Activated CD4-positive, alpha-beta T cell treated with anti-CD3 and anti-CD28 coated beads, Interleukin-2, amount 10 ng/mL, durations not matched to agents 24 days and 14 days (primary cell): ENCODE measurements at regions of chr1 and their contacts with region 1.

Region 1: DNA sequence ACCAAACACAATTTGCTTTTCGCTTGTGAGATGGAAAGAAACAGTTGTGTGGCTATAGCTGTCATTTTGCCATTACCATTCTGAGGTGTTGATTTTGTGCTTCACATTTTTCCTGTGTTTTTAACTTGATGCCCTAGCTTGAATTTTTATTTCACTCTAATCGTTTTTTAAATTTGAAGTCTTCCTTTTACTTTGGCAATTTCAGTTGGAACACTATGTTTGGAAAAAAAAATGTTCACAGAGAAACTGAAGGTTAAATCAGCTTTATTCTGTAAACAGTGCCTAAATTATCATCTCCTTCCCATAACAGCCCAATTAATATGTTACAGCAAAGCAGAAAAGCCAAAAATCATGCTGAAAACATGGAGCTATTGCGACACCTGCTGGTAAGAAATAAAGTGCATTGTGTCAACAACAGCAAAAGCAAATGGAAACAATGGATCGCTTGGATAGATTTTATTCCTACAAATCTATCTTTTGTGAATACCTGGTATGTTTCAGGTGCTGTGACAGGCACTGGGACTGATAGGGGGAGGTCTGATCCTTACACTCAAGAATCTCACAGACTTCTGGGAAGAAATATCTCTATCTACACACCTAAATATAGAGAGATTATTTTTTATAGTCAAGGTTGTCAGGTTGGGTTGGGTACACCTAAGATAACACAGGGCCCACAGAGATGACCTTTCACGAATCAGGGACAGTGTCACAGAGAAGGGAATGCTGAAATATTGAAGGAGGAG is 16.2 kb upstream of the ERICH3 start:
- DNase-seq: peak; percentile 84
- H3K4me3 Mint-ChIP-seq: no peak overlapping the region
- H3K27ac Mint-ChIP-seq: no peak overlapping the region
- H3K4me1 Mint-ChIP-seq: no peaks in the 10 kb centered on the region
- H3K27me3 Mint-ChIP-seq: peaks cover 13% of the 10 kb centered on the region

Region 2: DNA sequence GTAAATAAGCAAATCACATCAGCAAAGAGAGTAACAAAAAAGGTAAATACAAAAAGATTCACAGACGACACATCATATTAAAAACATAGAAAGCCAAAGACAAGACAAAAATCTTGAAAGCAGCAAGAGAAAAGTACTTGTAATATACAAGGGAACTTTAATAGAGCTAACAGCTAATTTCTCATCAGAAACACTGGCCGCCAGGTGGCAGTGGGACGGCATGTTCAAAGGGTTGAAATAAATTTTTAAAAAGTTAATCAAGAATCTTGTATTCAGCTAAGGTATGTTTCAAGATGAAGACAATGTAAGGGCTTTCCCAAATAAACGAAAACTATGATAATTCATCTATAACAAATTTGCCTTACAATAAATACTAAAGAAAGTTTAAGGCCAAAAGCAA is 849.9 kb before region 1 on chr1:
- intact Hi-C with region 1: loop called (anchors 2 kb)
- DNase-seq: no peak
- H3K4me3 Mint-ChIP-seq: no peak overlapping the region
- H3K27ac Mint-ChIP-seq: no peak overlapping the region
- H3K4me1 Mint-ChIP-seq: no peaks in the 10 kb centered on the region
- H3K27me3 Mint-ChIP-seq: no peaks in the 10 kb centered on the region